WTC11 (cell line): ENCODE measurements at regions of chr12 and their contacts with region 1.

Region 1: DNA sequence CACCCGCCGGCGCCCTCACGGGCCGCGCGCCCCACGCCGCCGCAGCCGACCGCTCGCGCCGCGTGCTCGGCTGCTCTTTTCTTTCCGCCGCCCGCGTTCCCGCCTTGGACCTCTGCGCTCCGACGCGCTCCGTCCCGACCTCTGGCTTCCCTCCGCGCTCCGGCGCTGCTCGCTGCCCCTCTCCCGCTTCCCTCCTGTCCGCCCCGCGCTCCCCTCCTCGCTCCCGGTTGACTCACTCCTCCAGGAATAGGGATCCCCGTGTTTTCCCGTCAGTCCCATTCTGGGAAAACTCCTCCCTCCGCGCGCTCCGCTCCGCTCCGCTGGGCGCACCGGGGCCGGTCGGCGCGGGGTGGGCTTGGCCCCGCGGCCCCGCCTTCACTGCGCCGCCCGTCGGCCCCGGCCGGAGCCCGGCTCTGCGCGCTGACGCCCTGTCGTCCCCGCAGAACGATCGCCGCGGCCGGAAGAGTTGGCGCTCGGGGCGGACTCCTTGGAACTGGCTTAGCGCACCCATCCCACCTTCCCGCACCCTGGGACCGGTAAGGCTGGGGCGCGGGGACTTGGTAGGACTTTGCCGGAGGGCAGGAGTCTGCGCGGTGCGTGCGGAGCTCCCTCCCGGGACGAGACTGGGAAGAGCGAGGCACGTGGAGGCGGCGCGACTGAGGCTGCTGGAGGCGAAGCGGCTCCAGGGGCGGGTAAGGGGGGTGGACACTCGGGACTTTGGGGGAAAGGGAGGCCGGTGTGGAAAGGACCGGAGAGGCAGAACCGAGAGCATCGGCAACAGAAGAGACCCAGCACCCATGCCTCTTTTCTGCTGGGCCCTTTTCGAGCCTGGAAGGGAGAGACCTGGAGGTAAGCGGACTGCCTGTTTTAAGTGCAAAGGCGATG is 550 bp downstream of the TEAD4 start:
- DNase-seq: peak; percentile 49
- ATAC-seq: peak; percentile 7
- H3K4me3 Mint-ChIP-seq: peak overlapping the region; percentile 84
- H3K27ac Mint-ChIP-seq: peak overlapping the region; percentile 52
- H3K4me1 Mint-ChIP-seq: peaks cover 54% of the 10 kb centered on the region
- H3K27me3 Mint-ChIP-seq: no peaks in the 10 kb centered on the region; the same call in 1 of the 2 replicates
- CTCF ChIP-seq: no peak

Region 2: DNA sequence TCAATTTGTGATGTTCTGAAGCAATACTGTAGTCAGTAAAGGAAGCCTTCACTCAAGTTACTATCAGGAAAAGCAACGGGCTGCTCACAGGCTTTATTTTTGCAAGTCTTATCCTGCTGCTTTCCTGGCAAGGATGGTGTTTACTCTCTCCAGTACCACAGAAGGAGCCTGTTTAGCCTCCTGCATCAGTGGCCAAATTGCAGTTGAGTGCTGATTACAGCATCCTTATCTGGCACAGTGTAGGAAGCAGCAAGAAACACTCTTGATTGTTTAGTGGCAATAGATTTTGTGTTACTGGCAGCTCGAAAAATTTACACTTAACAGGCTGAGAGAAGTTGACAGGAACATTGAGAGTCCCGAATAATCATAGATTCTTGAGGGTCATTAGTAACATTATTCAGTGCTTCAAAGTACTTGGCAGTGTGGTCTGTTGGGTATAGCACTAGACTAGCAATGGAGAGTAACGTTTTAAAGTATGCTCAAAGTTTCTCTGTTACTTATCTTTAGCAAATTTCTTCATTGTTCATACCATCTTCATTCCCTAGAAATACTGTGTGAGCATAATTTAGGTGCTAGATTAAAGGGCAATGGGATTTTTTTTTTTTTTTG is 57.4 kb before region 1 on chr12:
- CTCF ChIA-PET with region 1: no interaction called
- POLR2A ChIA-PET with region 1: no interaction called
- DNase-seq: no peak
- ATAC-seq: no peak
- H3K4me3 Mint-ChIP-seq: no peak overlapping the region
- H3K27ac Mint-ChIP-seq: no peak overlapping the region; the same call in 1 of the 2 replicates
- H3K4me1 Mint-ChIP-seq: peaks cover 3% of the 10 kb centered on the region; the same call in 1 of the 2 replicates
- H3K27me3 Mint-ChIP-seq: no peaks in the 10 kb centered on the region
- CTCF ChIP-seq: no peak

Region 3: DNA sequence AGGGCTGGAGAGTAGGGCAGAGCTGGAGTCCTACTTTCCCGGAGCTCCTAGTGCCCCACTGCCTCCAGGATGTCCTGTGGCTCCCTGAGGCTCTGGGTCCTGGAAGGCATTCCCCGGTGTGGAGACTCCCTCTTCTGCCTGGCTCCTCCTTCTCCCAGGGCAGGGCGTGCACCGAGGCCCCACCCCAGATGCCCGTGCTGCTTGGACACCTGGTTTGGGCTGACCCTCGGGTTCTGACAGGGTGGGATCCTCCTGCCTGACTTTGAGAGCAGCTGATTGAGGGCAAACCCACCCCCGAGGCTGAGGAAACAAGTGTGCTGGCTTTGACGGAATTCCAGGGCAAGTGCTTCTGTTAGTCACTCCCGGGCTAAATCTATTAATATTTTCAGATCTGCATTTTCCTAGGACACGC is 14.8 kb after region 1 on chr12:
- CTCF ChIA-PET with region 1: interaction called, 3 read pairs
- POLR2A ChIA-PET with region 1: interaction called, 12 read pairs
- DNase-seq: peak; percentile 50
- ATAC-seq: peak; percentile 72
- H3K4me3 Mint-ChIP-seq: no peak overlapping the region
- H3K27ac Mint-ChIP-seq: peak overlapping the region; percentile 81; the same call in 1 of the 2 replicates
- H3K4me1 Mint-ChIP-seq: peaks cover 49% of the 10 kb centered on the region
- H3K27me3 Mint-ChIP-seq: no peaks in the 10 kb centered on the region
- CTCF ChIP-seq: no peak

Region 4: DNA sequence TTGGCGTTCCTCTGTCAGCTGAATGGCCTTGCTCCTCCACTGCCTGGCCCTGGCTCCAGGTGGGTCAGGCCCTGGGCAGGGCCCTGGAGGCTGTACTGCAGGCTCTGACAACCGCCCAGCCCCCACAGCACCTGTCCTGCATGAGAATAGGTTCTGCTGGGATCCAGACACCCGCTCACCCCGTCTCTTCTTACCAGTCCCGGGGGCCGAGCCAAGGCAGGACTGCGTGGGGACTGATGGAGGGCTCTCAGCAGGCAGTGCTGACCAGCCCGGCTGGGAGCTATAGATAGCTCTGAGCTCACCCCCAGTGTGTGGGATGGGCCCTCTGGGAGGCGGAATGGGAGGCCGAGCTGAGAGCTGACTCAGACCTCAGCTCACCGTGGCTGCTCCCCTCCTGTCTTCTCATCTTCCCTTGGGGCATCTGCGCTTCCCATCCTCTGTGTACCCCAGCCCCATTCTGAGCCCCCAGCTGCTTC is 39.1 kb after region 1 on chr12:
- CTCF ChIA-PET with region 1: interaction called, 10 read pairs
- POLR2A ChIA-PET with region 1: interaction called, 12 read pairs
- DNase-seq: peak; percentile 68
- ATAC-seq: peak; percentile 75
- H3K4me3 Mint-ChIP-seq: peak overlapping the region; percentile 40
- H3K27ac Mint-ChIP-seq: peak overlapping the region; percentile 92
- H3K4me1 Mint-ChIP-seq: peaks cover 49% of the 10 kb centered on the region
- H3K27me3 Mint-ChIP-seq: no peaks in the 10 kb centered on the region
- CTCF ChIP-seq: no peak

Region 5: GRCh38 chr12:3004655-3005565 is 45.2 kb after region 1 on chr12:
- CTCF ChIA-PET with region 1: interaction called, 10 read pairs
- POLR2A ChIA-PET with region 1: interaction called, 3 read pairs
- DNase-seq: no peak
- ATAC-seq: peak; percentile 40
- H3K4me3 Mint-ChIP-seq: no peak overlapping the region
- H3K27ac Mint-ChIP-seq: peak overlapping the region; percentile 82
- H3K4me1 Mint-ChIP-seq: peaks cover 20% of the 10 kb centered on the region
- H3K27me3 Mint-ChIP-seq: no peaks in the 10 kb centered on the region
- CTCF ChIP-seq: no peak

Region 6: DNA sequence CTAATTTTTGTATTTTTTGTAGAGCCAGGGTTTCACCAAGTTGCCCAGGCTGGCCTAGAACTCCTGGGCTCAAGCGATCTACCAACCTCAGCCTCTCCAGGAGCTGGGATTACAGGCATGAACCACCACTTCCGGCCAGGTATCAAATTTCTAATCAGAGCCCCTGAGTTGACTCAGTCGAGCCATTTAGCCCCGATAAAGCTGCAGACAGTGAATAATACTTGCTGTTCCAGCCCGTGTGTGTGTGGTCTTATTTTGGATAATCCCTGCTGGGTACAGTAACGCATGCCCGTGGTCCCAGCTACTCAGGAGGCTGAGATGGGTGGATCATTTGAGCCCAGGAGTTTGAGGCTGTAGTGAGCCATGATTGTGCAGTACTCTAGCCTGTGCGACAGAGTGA is 56.4 kb after region 1 on chr12:
- CTCF ChIA-PET with region 1: no interaction called
- POLR2A ChIA-PET with region 1: no interaction called
- DNase-seq: no peak
- ATAC-seq: no peak
- H3K4me3 Mint-ChIP-seq: no peak overlapping the region
- H3K27ac Mint-ChIP-seq: no peak overlapping the region
- H3K4me1 Mint-ChIP-seq: 0 out of 2 replicates have a peak, but pooled peaks cover 3% of the 10 kb centered on the region
- H3K27me3 Mint-ChIP-seq: no peaks in the 10 kb centered on the region
- CTCF ChIP-seq: no peak